HEK293T (cell line): ENCODE measurements at regions of chr22 and their contacts with region 1.

Region 1: GRCh38 chr22:29040385-29041275 is 21.0 kb downstream of the C22orf31 start:
- DNase-seq: peak; percentile 77

Region 2: DNA sequence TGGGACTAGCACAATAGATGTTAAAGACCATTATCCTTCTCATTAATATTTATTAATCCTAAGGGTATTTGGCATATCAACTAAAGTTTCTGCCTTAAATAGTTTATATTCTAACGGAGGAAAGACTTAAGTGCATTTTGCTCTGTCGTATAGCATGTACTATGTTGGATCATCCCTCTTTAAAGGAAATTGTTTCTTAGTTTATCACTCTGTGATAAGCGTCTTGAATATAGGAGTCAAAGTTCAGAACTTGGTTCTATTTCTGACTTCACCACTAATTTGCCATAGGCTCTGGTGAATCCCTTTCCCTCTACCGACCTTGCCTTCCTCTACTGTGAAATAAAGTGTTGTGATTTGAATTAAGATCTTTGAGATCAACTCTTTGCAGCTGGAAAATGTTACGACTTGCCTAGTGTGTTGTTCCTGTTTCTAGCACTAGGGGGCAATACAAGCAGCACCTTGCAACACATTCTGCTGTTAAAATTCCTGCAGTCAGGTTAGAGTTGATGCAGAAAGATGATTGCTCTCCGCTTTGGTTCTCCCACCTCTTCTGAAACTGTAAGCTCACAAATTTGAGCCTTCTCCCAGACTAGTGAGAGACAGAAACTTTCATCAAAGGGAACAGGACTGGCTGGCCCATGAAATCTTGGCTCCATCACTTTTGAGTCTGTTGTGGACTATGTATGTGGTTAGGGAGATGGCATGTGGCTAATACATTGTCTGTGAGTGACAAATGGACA is 185.1 kb before region 1 on chr22:
- CTCF ChIA-PET with region 1: interaction called, 23 read pairs
- POLR2A ChIA-PET with region 1: no interaction called
- DNase-seq: peak; percentile 83